CD14-positive monocyte (primary cell): ENCODE measurements at regions of chr2 and their contacts with region 1.

Region 1: DNA sequence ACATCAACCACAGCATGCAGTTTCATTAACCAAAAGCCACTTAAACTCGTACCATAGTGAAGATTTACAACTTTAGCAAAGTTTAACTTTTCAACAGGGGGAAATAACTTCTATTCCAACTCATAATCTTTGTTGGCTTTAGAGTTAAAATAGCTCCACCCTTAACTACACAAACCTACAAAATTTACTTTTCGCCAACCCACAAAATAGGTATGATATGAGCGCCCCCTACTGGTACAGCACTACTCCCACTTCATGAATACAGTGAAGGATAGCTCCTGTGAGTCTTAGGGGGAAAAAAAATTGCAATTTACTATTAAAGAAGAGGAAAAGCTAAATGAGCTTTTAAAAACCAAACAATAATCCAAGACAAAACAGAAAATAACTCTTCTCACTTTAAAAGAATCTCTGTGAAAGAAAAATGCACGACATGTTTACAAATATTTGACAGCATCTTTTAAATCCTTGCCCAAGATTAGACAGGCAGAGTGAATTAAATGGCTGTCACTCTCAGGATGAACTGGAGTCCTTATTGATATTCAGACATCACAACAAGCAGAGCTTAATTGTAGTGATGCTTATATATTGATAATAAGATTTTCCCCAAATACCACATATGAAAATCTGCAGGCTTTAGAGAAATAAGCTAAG is 32.2 kb downstream of the TMEFF2 start:
- DNase-seq: peak; percentile 36 to 52 (median 48)
- H3K4me3 ChIP-seq: peak overlapping the region in 1 of 3 experiments; percentile 29
- H3K4me3 Mint-ChIP-seq: peak overlapping the region in 1 of 2 donors; percentile 28
- H3K27ac ChIP-seq: no peak overlapping the region
- H3K27ac Mint-ChIP-seq: no peak overlapping the region
- H3K4me1 ChIP-seq: peaks cover 9 to 14% of the 10 kb centered on the region in 2 donors
- H3K4me1 Mint-ChIP-seq: peaks cover 15% of the 10 kb centered on the region
- H3K27me3 ChIP-seq: no peaks in the 10 kb centered on the region
- H3K27me3 Mint-ChIP-seq: no peaks in the 10 kb centered on the region
- CTCF ChIP-seq: peak; percentile 95

Region 2: GRCh38 chr2:191552066-191552465 is 610.5 kb before region 1 on chr2:
- intact Hi-C with region 1: loop called (anchors 5 kb)
- DNase-seq: no peak
- H3K4me3 ChIP-seq: no peak overlapping the region
- H3K4me3 Mint-ChIP-seq: no peak overlapping the region
- H3K27ac ChIP-seq: no peak overlapping the region
- H3K27ac Mint-ChIP-seq: no peak overlapping the region
- H3K4me1 ChIP-seq: no peaks in the 10 kb centered on the region
- H3K4me1 Mint-ChIP-seq: peaks cover 1% of the 10 kb centered on the region
- H3K27me3 ChIP-seq: no peaks in the 10 kb centered on the region
- H3K27me3 Mint-ChIP-seq: peaks cover 0 to 3% (median 2%) of the 10 kb centered on the region in 3 donors
- CTCF ChIP-seq: no peak

Region 3: GRCh38 chr2:191811807-191812602 is 350.5 kb before region 1 on chr2:
- intact Hi-C with region 1: loop called (anchors 5 kb)
- DNase-seq: peak in 2 of 3 donors; percentile 15 to 21
- H3K4me3 ChIP-seq: no peak overlapping the region
- H3K4me3 Mint-ChIP-seq: no peak overlapping the region
- H3K27ac ChIP-seq: no peak overlapping the region
- H3K27ac Mint-ChIP-seq: no peak overlapping the region
- H3K4me1 ChIP-seq: no peaks in the 10 kb centered on the region
- H3K4me1 Mint-ChIP-seq: no peaks in the 10 kb centered on the region
- H3K27me3 ChIP-seq: no peaks in the 10 kb centered on the region
- H3K27me3 Mint-ChIP-seq: peaks cover 0 to 3% (median 3%) of the 10 kb centered on the region in 3 donors
- CTCF ChIP-seq: peak; percentile 74

Region 4: DNA sequence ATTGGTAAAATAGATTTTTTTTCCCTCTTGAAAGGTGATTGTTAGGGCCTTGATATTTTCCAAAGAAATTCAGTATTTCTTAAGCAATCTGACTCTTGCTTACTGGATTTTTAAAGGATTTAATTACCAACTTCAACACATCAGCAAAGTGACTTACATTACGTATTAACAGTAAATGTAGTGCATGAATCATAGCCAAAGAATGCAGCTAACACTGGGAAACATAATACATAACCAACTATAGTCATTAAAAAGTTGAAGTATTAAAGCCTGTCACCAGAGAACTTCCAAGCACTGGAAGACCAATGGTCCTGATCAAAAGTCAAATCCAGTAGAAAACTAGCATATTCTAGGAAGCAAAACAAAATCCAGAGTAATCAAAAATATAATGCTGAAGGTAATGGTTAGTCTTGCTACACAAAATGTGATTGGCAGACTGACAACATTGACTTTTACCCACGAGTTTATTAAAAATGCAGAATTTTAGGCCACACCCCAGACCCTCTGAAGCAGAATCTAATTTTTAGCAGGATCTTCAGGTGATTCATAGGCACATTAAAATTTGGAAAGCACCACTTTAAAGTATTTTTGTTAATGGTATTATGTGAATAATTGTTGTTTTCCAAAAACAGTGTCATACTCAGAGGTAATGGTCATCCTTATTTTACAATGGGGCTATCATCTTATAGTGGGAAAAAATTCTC is 283.8 kb before region 1 on chr2:
- intact Hi-C with region 1: no loop called
- DNase-seq: no peak
- H3K4me3 ChIP-seq: no peak overlapping the region
- H3K4me3 Mint-ChIP-seq: no peak overlapping the region
- H3K27ac ChIP-seq: no peak overlapping the region
- H3K27ac Mint-ChIP-seq: no peak overlapping the region
- H3K4me1 ChIP-seq: no peaks in the 10 kb centered on the region
- H3K4me1 Mint-ChIP-seq: no peaks in the 10 kb centered on the region
- H3K27me3 ChIP-seq: no peaks in the 10 kb centered on the region
- H3K27me3 Mint-ChIP-seq: no peaks in the 10 kb centered on the region
- CTCF ChIP-seq: no peak

Region 5: GRCh38 chr2:192236136-192236535 is 73.6 kb after region 1 on chr2:
- intact Hi-C with region 1: no loop called
- DNase-seq: no peak
- H3K4me3 ChIP-seq: no peak overlapping the region
- H3K4me3 Mint-ChIP-seq: no peak overlapping the region
- H3K27ac ChIP-seq: no peak overlapping the region
- H3K27ac Mint-ChIP-seq: no peak overlapping the region
- H3K4me1 ChIP-seq: no peaks in the 10 kb centered on the region
- H3K4me1 Mint-ChIP-seq: no peaks in the 10 kb centered on the region
- H3K27me3 ChIP-seq: no peaks in the 10 kb centered on the region
- H3K27me3 Mint-ChIP-seq: no peaks in the 10 kb centered on the region
- CTCF ChIP-seq: no peak